Activated T-helper 1 cell treated with anti-CD3 and anti-CD28 coated beads, Interleukin-12 subunit alpha, Interleukin-12 subunit beta, Interleukin-2, Interleukin-4 antibody, amounts not matched to agents 30 ng/mL and 10 ng/mL and 1 ng/mL, durations not matched to agents 14 hours and 24 hours and 36 hours (primary cell): ENCODE measurements at regions of chr1 and their contacts with region 1.

Region 1: DNA sequence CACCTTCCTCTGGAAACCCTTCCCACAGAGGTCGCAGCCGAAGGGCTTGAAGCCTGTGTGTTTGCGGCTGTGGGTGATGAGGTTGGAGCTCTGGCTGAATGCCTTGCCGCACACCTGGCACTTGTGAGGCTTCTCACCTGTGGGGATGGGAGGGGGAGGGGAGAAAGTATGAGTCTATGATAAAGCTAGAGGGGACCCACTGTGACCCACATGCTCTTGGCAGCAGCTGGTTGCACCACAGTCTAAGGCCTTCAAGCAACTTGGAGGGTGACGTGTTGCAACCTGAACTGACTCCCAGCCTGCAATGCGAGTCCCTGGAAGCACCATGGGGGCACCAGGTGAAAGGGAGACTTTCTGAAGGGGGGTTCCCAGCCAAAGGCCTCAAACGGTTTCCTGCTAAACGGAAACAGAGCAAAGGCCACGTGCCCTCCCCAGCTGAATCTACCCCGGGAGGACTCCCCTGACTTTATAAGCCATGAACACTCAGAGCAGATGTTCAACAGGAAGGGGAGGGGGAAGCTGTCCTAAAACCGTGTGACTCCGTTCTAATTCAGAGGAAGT is 10.6 kb downstream of the GFI1 start:
- DNase-seq: peak; percentile 67
- H3K4me3 Mint-ChIP-seq: peak overlapping the region; percentile 71
- H3K27ac Mint-ChIP-seq: peak overlapping the region; percentile 79
- H3K4me1 Mint-ChIP-seq: peaks cover 81% of the 10 kb centered on the region
- H3K27me3 Mint-ChIP-seq: no peaks in the 10 kb centered on the region

Region 2: DNA sequence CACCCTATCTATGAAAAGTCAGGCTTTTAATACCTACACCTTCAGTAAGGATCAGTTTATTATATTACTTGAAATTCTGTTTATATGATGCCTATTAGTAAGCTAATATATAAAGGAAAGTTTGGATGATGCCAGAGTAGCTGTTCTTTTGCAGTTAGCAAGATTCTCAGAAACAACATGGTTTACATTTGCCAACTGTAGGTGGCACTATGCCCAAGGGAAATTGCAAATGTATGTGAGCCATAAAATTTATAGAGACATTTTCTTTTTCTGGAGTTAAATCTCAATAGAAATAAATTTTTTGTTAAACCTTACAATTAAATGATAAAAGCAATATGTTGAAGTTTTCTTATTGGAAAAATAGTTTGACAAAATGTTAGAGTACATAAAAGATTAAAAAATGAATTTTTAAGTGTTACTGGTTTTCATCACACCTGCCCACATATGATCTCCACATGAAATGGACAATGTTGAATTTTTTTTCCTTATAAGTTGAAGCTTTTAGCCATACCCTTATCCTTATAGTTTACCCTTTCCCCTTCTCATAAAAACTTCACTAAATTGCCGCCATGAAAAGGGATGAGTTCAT is 478.4 kb before region 1 on chr1:
- intact Hi-C with region 1: loop called (anchors 10 kb)
- DNase-seq: peak; percentile 2
- H3K4me3 Mint-ChIP-seq: no peak overlapping the region
- H3K27ac Mint-ChIP-seq: no peak overlapping the region
- H3K4me1 Mint-ChIP-seq: no peaks in the 10 kb centered on the region
- H3K27me3 Mint-ChIP-seq: peaks cover 10% of the 10 kb centered on the region

Region 3: GRCh38 chr1:92310185-92310597 is 166.0 kb before region 1 on chr1:
- intact Hi-C with region 1: loop called (anchors 1 kb)
- DNase-seq: no peak
- H3K4me3 Mint-ChIP-seq: no peak overlapping the region
- H3K27ac Mint-ChIP-seq: no peak overlapping the region
- H3K4me1 Mint-ChIP-seq: peaks cover 42% of the 10 kb centered on the region
- H3K27me3 Mint-ChIP-seq: no peaks in the 10 kb centered on the region

Region 4: DNA sequence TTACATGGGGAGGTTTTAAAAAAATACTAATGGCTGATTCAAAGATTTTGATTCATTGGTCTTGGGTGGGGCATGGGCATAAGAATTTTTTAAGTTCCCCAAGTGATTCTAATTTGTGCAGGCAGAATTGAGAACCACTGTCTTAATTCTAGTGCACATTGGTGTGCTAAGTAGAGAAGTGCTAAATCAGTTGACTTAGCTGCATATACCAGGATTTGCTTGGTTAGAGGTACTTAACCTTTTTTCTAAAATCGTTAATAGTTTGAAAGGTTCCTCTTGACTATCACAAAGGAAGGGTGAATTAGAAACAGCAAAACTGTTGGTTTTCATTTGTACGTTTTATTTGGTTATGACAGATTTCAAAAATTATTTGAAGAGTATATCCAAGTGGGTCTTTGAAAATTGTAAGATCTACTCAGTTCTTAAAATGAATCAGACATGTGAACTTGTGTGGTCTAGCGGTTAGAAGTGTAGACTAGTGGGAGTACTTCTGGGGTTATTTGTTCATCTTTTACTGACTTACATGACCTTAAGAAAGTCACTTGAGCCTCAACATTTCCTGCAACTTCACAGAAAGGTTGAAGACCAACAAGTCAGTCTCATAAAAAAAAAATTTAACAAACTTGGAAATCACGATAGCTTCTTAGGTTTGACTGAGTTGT is 110.6 kb before region 1 on chr1:
- intact Hi-C with region 1: loop called (anchors 2 kb)
- DNase-seq: peak; percentile 10
- H3K4me3 Mint-ChIP-seq: peak overlapping the region; percentile 3
- H3K27ac Mint-ChIP-seq: peak overlapping the region; percentile 76
- H3K4me1 Mint-ChIP-seq: peaks cover 59% of the 10 kb centered on the region
- H3K27me3 Mint-ChIP-seq: no peaks in the 10 kb centered on the region

Region 5: DNA sequence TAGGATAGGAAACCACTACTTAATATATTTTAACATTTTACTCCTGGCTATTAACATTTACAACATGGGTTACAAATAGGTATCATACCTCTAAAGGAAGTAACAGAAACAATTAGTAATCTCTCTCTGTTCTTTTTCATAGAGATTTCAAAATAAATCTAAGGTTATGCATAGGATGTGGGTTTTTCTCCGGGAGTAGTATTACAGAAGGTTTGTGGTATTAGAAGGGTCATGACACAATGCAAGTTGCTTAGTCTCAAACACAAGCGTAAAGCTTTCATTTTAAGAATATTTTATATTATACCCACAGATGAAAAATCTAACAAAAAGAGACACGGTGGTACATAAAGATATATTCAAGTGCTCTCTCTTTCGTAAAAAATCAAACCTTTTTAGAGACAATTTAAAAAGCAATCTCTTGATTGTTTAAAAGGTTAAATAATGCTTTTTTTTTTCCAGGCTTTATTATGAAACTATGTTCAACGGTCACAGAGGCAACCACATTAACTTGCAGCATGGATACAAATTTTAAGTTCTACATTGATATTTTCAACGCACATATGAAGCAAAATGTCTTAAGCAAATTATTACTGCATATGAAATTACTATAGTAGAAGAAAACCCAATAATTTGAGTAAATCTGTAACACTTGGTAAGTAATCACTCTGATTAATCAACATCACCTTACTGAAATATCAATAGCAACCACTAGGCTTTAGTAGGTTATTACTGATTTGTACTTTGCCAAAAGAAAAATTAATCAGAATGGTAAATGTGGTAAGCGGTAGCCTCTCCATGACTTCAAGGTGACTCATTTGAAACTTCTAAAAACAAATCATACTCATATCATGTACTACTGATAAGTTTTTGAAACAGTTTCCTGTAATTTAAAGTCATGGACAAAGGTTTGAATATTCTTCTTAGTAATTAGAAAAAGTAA is 107.9 kb after region 1 on chr1:
- intact Hi-C with region 1: loop called (anchors 1 kb)
- DNase-seq: no peak
- H3K4me3 Mint-ChIP-seq: peak overlapping the region; percentile 62
- H3K27ac Mint-ChIP-seq: peak overlapping the region; percentile 91
- H3K4me1 Mint-ChIP-seq: peaks cover 75% of the 10 kb centered on the region
- H3K27me3 Mint-ChIP-seq: no peaks in the 10 kb centered on the region

Region 6: DNA sequence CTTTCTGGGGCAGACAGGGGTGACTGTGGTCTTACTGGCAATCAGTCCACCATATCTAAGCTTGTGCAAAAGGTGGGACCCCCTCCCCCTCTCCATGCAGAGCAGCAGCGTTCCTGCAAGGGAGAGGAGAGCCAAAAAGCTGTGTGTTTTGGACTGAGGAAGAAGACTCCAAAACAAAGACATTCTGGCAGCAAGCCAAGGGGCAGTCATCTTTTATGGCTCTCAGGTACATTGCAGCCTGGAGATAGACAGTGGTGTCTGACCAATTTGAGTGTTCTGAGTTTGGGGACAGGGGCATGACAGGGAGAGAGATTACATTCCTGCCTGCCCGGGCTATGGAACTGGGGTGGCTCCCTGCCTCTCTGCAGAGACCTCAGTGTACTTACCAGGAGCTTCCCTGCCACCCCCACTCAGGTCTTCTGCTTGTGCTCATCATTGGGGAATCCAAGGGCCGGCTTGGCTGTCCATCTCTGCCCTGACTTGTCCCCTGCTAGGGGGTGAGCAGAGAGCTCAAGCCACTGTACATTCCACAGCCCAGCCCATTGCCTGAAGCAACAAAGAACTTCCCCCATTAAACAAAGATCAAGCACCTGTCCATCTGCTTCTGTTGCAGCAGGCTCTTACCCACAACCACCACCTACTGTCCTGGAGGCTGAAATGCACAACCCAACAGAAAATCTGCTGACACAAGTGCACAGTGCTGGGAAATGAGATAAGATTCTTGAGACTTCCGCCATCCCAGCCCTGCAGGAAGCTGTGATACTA is 177.6 kb after region 1 on chr1:
- intact Hi-C with region 1: no loop called
- DNase-seq: no peak
- H3K4me3 Mint-ChIP-seq: no peak overlapping the region
- H3K27ac Mint-ChIP-seq: no peak overlapping the region
- H3K4me1 Mint-ChIP-seq: no peaks in the 10 kb centered on the region
- H3K27me3 Mint-ChIP-seq: peaks cover 8% of the 10 kb centered on the region

Region 7: DNA sequence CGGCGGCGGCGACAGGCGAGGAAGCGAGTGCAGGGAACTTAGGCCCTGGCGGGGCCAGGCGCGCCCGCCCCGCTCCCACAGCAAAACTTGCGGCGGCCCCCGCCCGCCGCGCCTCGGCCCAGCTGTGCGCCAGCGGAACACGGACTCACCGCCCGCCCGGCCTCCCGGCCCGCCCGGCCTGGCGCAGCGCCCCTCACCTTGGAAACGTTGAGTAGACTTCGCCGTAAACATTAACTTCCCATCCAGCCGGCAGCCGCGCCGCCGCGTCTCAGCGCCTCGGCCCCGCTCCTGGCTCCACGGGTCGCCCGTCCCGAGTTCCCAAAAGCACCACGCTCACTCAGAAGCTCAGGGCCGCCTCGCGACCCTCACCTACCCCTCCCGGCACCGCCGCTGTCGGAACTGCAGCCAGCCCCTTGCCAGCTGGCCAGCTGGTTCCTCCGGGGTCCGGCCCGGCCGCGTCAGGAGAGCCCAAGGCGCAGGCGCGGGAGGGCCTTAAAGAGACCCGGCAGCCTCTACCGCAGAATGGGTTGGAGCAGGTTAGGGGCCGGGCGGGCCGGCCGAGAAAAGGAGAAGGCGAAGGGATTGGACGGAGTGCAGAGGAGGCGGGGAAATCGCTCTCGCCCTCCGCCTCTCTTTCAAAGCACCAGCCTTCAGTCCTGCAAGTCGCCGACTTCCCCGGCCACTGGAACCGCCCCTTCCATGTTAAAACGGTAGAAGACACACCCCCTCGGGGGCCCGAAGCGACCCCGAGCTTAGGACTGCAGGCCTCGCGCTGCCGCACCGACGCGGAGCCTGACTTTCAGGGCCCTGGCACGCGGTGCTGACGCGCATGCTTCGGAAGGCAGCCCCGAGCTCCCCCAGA is 308.7 kb after region 1 on chr1 and contains the start of gene EVI5:
- intact Hi-C with region 1: loop called (anchors 10 kb)
- DNase-seq: peak; percentile 28
- H3K4me3 Mint-ChIP-seq: peak within 1 kb of the TSS; percentile 75
- H3K27ac Mint-ChIP-seq: peak within 1 kb of the TSS; percentile 61
- H3K4me1 Mint-ChIP-seq: peaks cover 14% of the 10 kb centered on the region
- H3K27me3 Mint-ChIP-seq: peaks cover 77% of the 10 kb centered on the region
- total RNA-seq, gene EVI5: 11.0 and 11.3 TPM in 2 replicates